Right ventricle myocardium inferior (tissue), 1 donor: ENCODE measurements at regions of chr11 and their contacts with region 1.

Region 1: DNA sequence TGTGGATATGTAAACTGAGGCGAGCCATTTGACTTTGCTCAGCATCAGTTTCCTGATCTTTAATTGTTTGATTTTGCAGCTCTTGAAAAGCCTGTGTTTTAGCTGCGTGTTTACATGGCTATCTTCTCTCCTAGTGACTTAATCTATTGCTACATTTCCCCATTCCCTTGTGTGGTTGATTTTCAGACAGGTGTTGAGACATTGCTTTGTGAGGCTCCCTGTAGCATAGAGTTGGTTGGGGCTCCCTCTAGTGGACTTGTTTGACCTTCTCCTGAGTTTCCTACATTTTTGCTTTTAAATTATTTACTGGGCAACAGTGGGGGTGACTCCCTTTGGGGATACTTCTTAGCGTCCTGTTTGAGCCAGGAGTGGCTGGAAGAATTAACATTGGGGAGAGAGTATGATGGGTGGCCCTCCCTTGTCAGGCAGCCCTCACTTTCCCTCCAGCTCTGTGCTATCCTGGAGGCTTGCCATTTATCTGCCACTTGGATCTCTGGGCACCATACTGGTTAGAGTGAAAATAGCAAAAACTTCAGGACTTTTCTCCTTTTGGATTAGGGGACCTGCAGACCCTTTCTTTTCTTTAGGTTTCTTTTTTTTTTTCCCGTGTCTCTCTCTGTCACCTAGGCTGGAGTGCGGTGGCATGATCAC is 9.2 kb upstream of the CBL start:
- DNase-seq: no peak
- ATAC-seq: peak; percentile 87

Region 2: GRCh38 chr11:119149018-119149785 is 47.8 kb before region 1 on chr11 and contains the start of gene ABCG4:
- intact Hi-C with region 1: loop called (anchors 2 kb)
- DNase-seq: no peak
- ATAC-seq: peak; percentile 22
- total RNA-seq, gene ABCG4: 1.3 TPM

Region 3: DNA sequence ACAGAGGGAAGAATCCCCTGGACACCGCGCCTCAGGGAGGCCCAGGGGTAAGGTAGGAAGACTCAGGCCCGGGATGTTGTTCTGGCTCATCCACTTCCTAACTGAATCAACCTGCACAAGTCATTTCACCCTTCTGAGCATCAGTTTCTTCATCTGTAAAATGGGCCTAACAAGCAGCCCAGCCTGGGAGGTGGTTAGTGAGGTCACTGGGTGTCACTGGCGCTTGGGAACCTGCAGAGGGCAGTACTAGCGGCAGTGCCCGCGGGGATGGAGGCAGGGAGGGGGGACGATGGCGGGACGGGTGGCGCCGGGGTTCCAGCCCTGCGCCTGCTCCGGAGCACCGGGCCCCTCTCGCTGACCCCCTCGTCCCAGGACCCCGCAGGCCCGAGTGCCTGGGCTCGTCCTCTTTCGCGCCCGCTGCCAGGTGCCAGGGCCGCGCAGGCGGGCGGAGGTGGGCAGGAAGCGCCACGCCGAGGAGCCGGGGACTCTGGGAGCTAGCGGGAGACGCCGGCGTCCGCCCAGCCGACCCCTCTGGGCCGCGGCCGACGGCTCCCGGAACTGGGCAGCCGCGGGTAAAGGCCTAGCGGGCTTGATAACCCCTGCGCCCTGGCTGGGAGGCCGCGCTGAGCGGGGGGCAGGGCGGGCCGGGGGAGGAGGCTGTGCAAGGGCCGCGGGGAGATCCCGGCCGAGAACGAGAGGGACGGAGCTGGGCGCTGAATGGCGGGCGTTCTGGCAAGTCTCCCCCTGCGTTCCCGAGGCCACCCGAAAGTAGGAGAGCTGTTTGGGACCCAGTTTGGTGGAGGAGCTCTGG is 28.3 kb before region 1 on chr11 and contains the start of gene NLRX1:
- intact Hi-C with region 1: loop called (anchors 2 kb)
- DNase-seq: peak; percentile 95
- ATAC-seq: peak; percentile 96
- total RNA-seq, gene NLRX1: 32.4 TPM